B cell (primary cell): ENCODE measurements at regions of chr17 and their contacts with region 1.

Region 1: GRCh38 chr17:17496189-17497064 is at the start of gene RASD1:
- DNase-seq: peak; percentile 86
- ATAC-seq: peak; percentile 88
- H3K4me3 ChIP-seq: peak within 1 kb of the TSS; percentile 42 to 67 (median 58)
- H3K4me3 Mint-ChIP-seq: peak within 1 kb of the TSS; percentile 92
- H3K27ac ChIP-seq: no peak within 1 kb of the TSS
- H3K27ac Mint-ChIP-seq: no peak within 1 kb of the TSS
- H3K4me1 ChIP-seq: peaks cover 24% of the 10 kb centered on the region in 2 donors
- H3K4me1 Mint-ChIP-seq: peaks cover 22% of the 10 kb centered on the region
- H3K27me3 ChIP-seq: peaks cover 0 to 29% (median 6%) of the 10 kb centered on the region in 4 experiments
- H3K27me3 Mint-ChIP-seq: peaks cover 8% of the 10 kb centered on the region
- CTCF ChIP-seq: peak; percentile 94
- total RNA-seq, gene RASD1: 3.2 and 4.4 TPM in 2 replicates

Region 2: GRCh38 chr17:16496820-16497489 is 999.5 kb before region 1 on chr17:
- CTCF ChIA-PET with region 1: no interaction called
- POLR2A ChIA-PET with region 1: no interaction called
- intact Hi-C with region 1: no loop called
- DNase-seq: no peak
- ATAC-seq: no peak
- H3K4me3 ChIP-seq: no peak overlapping the region
- H3K4me3 Mint-ChIP-seq: no peak overlapping the region
- H3K27ac ChIP-seq: no peak overlapping the region
- H3K27ac Mint-ChIP-seq: no peak overlapping the region
- H3K4me1 ChIP-seq: peaks cover 0 to 4% of the 10 kb centered on the region in 2 donors
- H3K4me1 Mint-ChIP-seq: peaks cover 2% of the 10 kb centered on the region
- H3K27me3 ChIP-seq: peaks cover 0 to 15% (median 1%) of the 10 kb centered on the region in 4 experiments
- H3K27me3 Mint-ChIP-seq: peaks cover 23% of the 10 kb centered on the region
- CTCF ChIP-seq: no peak

Region 3: DNA sequence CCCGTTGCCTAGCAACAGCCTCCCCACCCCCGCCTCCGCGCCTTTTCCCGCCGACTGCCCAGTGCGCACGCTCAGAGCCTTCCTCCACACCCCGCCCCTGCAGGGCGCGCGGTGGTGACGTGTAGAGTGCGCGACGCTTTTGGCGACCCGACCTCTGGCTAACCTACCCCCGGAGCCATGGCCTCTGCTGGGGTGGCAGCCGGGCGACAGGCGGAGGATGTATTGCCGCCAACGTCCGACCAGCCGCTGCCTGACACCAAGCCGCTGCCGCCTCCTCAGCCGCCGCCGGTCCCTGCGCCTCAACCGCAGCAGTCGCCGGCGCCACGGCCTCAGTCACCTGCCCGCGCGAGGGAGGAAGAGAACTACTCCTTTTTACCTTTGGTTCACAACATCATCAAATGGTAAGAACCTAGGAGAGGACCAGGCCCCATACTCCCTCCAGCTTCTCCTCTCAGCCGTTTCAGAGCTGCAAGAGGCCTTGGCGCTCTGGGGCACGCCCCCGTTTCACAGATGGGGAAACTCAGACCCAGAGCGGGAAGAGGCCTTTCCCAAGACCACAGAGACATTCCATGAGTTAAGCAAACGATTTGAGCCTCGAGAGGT is 19.5 kb before region 1 on chr17 and contains the start of gene MED9:
- CTCF ChIA-PET with region 1: no interaction called
- POLR2A ChIA-PET with region 1: no interaction called
- intact Hi-C with region 1: loop called (anchors 1 kb)
- DNase-seq: peak; percentile 96
- ATAC-seq: peak; percentile 100
- H3K4me3 ChIP-seq: peak within 1 kb of the TSS; percentile 83 to 92 (median 89)
- H3K4me3 Mint-ChIP-seq: peak within 1 kb of the TSS; percentile 91
- H3K27ac ChIP-seq: peak within 1 kb of the TSS; percentile 52 to 91
- H3K27ac Mint-ChIP-seq: peak within 1 kb of the TSS; percentile 95
- H3K4me1 ChIP-seq: peaks cover 12 to 17% of the 10 kb centered on the region in 2 donors
- H3K4me1 Mint-ChIP-seq: peaks cover 40% of the 10 kb centered on the region
- H3K27me3 ChIP-seq: no peaks in the 10 kb centered on the region
- H3K27me3 Mint-ChIP-seq: peaks cover 7% of the 10 kb centered on the region
- CTCF ChIP-seq: no peak
- total RNA-seq, gene MED9: 18.9 and 19.1 TPM in 2 replicates

Region 4: DNA sequence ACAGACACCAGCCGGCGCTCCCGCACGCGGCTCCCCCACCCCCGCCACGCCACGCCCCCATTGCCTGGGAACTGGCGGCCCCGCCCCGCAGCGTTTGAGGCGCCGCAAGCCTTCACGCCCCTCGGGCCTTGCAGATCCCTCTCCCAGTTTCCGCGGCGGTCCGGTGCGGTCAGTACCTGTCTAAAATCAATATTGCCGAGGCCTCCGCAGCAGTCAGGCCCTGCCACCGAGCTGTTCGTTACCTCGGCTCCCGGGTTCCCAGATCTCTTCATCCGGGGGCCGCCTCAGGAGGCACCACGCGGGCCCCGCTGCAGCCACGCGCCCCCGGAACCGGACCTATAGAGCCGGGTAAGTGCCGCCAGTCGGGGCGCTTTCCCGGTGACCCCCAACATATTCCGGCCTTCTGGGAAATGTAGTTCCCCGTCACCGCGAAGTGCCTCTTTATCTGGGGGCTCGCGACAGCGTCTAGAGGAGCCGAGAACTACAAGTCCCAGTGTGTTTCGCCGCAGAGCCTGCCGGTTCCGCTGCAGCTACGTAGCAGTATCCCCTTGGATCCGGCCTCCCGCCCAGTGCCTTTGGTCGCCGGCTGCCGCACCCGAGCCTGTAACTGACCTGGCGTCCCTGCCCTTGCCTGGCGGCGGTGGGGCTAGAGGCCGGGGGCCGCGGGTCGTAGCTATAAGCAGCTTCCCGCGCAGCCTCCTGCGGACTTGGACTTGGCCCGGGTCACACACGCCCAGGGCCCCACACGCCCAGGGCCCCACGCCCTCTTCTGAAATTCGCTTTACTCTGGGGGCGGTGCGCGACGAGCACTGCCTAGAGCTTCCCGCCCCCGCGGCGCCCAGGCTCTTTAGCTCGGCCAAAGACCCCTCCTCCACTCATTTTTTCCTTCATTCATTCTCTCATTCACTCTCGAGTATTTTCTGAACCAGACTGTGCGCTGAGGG is 95.2 kb after region 1 on chr17 and contains the start of gene PEMT:
- CTCF ChIA-PET with region 1: interaction called, 13 read pairs
- POLR2A ChIA-PET with region 1: interaction called, 3 read pairs
- intact Hi-C with region 1: loop called (anchors 1 kb)
- DNase-seq: peak; percentile 98
- ATAC-seq: peak; percentile 92
- H3K4me3 ChIP-seq: peak within 1 kb of the TSS; percentile 65 to 85 (median 71)
- H3K4me3 Mint-ChIP-seq: peak within 1 kb of the TSS; percentile 93
- H3K27ac ChIP-seq: peak within 1 kb of the TSS; percentile 67 to 80
- H3K27ac Mint-ChIP-seq: peak within 1 kb of the TSS; percentile 86
- H3K4me1 ChIP-seq: peaks cover 12 to 22% of the 10 kb centered on the region in 2 donors
- H3K4me1 Mint-ChIP-seq: peaks cover 16% of the 10 kb centered on the region
- H3K27me3 ChIP-seq: no peaks in the 10 kb centered on the region
- H3K27me3 Mint-ChIP-seq: no peaks in the 10 kb centered on the region
- CTCF ChIP-seq: no peak
- total RNA-seq, gene PEMT: 9.0 and 10.7 TPM in 2 replicates

Region 5: DNA sequence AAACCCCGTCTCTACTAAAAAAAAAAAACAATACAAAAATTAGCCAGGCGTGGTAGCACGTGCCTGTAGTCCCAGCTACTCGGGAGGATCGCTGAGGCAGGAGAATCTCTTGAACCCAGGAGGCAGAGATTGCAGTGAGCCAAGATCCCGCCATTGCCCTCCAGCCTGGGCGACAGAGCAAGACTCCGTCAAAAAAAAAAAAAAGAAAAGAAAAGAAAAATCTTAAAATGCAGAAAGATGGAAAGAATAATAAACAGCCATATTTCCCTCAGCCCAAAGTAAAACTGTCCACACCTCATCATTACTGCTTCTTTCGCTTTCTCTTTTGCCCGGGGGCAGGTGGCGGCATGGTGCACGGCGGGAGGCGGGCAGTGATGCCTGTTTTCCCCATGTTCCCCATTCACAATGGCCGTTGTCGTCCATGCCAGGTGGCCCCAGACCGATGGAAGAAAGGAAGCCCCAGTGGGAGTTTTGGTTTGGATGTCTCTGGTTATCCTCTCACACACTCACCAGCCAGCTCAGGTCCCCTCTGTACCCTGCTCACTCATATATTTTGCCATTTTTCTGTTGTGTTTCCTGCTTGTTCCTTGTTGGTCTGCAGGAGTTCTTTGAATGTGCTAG is 132.1 kb after region 1 on chr17:
- CTCF ChIA-PET with region 1: no interaction called
- POLR2A ChIA-PET with region 1: no interaction called
- intact Hi-C with region 1: loop called (anchors 5 kb)
- DNase-seq: peak; percentile 63
- ATAC-seq: peak; percentile 85
- H3K4me3 ChIP-seq: peak overlapping the region; percentile 25 to 77 (median 45)
- H3K4me3 Mint-ChIP-seq: peak overlapping the region; percentile 90
- H3K27ac ChIP-seq: peak overlapping the region; percentile 51 to 71
- H3K27ac Mint-ChIP-seq: peak overlapping the region; percentile 91
- H3K4me1 ChIP-seq: peaks cover 4 to 8% of the 10 kb centered on the region in 2 donors
- H3K4me1 Mint-ChIP-seq: peaks cover 8% of the 10 kb centered on the region
- H3K27me3 ChIP-seq: no peaks in the 10 kb centered on the region
- H3K27me3 Mint-ChIP-seq: no peaks in the 10 kb centered on the region
- CTCF ChIP-seq: no peak

Region 6: DNA sequence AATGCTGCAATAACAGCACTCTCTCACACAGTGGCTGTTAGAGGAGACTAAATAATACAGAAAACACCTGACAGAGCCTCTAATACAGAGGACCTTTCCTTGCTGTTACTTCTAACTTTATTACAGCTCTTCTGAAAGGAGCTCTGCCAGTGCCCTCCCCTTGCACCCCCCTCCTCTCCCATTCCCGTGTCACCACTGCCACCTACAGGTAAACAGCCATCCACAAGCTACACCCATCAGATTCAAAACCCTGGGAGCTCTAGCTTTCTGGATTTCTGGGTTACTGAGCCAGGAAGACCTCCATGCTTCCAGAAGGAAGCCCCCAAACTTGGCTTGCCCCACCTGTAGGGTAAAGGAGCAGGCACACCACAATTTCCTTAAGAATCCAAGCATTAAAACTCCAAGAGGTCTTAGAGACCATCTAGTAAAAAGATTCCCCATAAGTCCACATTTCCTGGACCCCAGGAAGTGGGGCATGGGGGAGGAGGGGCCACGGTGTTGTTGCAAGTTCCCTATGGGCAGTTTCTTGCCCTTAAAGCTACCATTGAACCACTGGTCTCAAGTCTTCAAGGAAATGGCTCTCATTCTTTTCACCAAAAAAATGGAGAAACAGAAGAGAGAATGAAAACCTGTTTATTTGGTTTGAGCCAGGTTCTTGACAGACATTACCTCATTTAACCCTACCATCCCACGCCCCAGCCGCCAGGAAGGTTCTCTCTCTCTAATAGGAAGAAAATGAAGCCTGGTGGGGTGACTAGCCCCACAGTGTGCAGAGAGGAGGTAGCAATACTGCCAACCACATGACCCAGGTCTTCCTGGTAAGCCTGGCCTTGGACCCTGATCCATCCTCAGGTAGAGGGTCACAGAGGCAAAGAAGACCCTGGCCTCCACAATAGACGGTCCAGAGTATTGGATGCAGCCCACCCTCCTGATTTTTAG is 423.0 kb after region 1 on chr17:
- CTCF ChIA-PET with region 1: interaction called, 29 read pairs
- POLR2A ChIA-PET with region 1: no interaction called
- intact Hi-C with region 1: no loop called
- DNase-seq: peak; percentile 67
- ATAC-seq: peak; percentile 69
- H3K4me3 ChIP-seq: no peak overlapping the region
- H3K4me3 Mint-ChIP-seq: no peak overlapping the region
- H3K27ac ChIP-seq: no peak overlapping the region
- H3K27ac Mint-ChIP-seq: no peak overlapping the region
- H3K4me1 ChIP-seq: no peaks in the 10 kb centered on the region
- H3K4me1 Mint-ChIP-seq: no peaks in the 10 kb centered on the region
- H3K27me3 ChIP-seq: no peaks in the 10 kb centered on the region
- H3K27me3 Mint-ChIP-seq: no peaks in the 10 kb centered on the region
- CTCF ChIP-seq: peak; percentile 71